ENCODE measurements at regions of chr7 and their contacts with region 1.

Region 1: DNA sequence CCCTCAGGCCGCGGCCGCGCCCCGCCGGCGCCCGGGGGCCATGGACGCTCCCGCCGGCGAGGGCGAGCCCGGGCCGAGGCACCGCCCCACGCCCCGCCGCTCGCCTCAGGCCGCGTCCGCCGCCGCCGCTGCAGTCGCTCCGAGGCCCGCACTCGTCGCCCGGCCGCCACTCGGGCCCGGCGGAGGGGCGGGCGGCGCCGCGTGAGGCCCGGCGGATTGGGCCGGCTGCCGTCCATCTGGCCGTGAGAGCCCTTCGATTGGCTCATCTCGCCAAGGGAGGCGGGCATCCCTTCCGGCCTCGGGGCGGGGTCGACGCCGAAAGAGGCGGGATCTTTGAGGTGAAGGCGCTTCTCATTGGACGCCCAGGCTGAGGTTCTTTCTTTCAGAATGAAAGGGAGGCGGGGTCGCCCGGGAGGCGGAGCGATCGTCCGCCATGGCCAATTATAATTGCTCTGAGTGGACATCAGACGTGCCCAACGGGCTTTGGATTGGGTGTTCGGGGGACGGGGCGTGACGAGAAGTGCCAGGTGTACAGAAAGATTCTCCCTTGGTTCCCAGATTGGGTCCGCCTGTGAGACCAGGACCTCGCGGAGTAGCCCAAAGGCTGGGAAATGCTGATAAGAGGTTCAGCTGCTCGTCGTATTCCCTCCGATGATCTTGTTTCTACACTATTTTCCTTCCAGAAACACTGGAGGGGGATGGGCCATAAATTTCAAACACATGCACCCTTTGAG is at the start of gene GNA12:
- DNase-seq: peak; percentile 97
- ATAC-seq: peak; percentile 93
- H3K4me3 Mint-ChIP-seq: peak within 1 kb of the TSS; percentile 87
- H3K27ac Mint-ChIP-seq: peak within 1 kb of the TSS; percentile 83
- H3K4me1 Mint-ChIP-seq: peaks cover 52% of the 10 kb centered on the region
- H3K27me3 Mint-ChIP-seq: no peaks in the 10 kb centered on the region
- CTCF ChIP-seq: no peak
- total RNA-seq, gene GNA12: 52.3 and 54.6 TPM in 2 replicates

Region 2: GRCh38 chr7:2403014-2403717 is 441.2 kb before region 1 on chr7 and contains the start of gene CHST12:
- CTCF ChIA-PET with region 1: no interaction called
- POLR2A ChIA-PET with region 1: no interaction called
- intact Hi-C with region 1: loop called (anchors 5 kb)
- DNase-seq: peak; percentile 91
- ATAC-seq: peak; percentile 77
- H3K4me3 Mint-ChIP-seq: peak within 1 kb of the TSS; percentile 85
- H3K27ac Mint-ChIP-seq: peak within 1 kb of the TSS; percentile 93
- H3K4me1 Mint-ChIP-seq: peaks cover 47% of the 10 kb centered on the region
- H3K27me3 Mint-ChIP-seq: no peaks in the 10 kb centered on the region
- CTCF ChIP-seq: no peak
- total RNA-seq, gene CHST12: 10.3 and 14.4 TPM in 2 replicates

Region 3: GRCh38 chr7:2555121-2556052 is 288.9 kb before region 1 on chr7 and contains the start of gene BRAT1:
- CTCF ChIA-PET with region 1: no interaction called
- POLR2A ChIA-PET with region 1: interaction called, 9 read pairs
- intact Hi-C with region 1: loop called (anchors 1 kb)
- DNase-seq: peak; percentile 89
- ATAC-seq: peak; percentile 86
- H3K4me3 Mint-ChIP-seq: peak within 1 kb of the TSS; percentile 87
- H3K27ac Mint-ChIP-seq: peak within 1 kb of the TSS; percentile 92
- H3K4me1 Mint-ChIP-seq: peaks cover 45% of the 10 kb centered on the region
- H3K27me3 Mint-ChIP-seq: no peaks in the 10 kb centered on the region
- CTCF ChIP-seq: no peak
- total RNA-seq, gene BRAT1: 29.6 and 31.7 TPM in 2 replicates

Region 4: GRCh38 chr7:2734751-2735571 is 109.4 kb before region 1 on chr7:
- CTCF ChIA-PET with region 1: no interaction called
- POLR2A ChIA-PET with region 1: interaction called, 3 read pairs
- intact Hi-C with region 1: loop called (anchors 5 kb)
- DNase-seq: peak; percentile 28
- ATAC-seq: peak; percentile 54
- H3K4me3 Mint-ChIP-seq: peak overlapping the region; percentile 33
- H3K27ac Mint-ChIP-seq: peak overlapping the region; percentile 54
- H3K4me1 Mint-ChIP-seq: peaks cover 49% of the 10 kb centered on the region
- H3K27me3 Mint-ChIP-seq: no peaks in the 10 kb centered on the region
- CTCF ChIP-seq: no peak

Region 5: DNA sequence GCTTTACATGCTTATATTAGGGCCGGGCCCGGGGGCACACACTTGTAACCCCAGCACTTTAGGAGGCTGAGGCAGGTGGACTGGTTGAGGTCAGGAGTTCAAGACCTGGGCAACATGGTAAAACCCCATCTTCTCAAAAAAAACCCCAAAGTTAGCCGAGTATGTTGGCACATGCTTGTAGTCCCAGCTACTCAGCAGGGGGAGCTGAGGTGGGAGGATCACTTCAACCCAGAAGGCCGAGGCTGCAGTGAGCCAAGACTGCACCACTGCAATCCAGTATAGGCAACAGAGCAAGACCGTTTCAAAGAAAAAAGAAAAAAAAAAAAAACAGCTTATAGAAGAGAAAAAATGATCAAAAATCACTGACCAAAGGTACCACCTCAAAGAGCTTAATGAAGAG is 93.2 kb before region 1 on chr7:
- CTCF ChIA-PET with region 1: no interaction called
- POLR2A ChIA-PET with region 1: no interaction called
- intact Hi-C with region 1: no loop called
- DNase-seq: no peak
- ATAC-seq: no peak
- H3K4me3 Mint-ChIP-seq: no peak overlapping the region
- H3K27ac Mint-ChIP-seq: peak overlapping the region; percentile 13
- H3K4me1 Mint-ChIP-seq: peaks cover 27% of the 10 kb centered on the region
- H3K27me3 Mint-ChIP-seq: no peaks in the 10 kb centered on the region
- CTCF ChIP-seq: no peak

Region 6: DNA sequence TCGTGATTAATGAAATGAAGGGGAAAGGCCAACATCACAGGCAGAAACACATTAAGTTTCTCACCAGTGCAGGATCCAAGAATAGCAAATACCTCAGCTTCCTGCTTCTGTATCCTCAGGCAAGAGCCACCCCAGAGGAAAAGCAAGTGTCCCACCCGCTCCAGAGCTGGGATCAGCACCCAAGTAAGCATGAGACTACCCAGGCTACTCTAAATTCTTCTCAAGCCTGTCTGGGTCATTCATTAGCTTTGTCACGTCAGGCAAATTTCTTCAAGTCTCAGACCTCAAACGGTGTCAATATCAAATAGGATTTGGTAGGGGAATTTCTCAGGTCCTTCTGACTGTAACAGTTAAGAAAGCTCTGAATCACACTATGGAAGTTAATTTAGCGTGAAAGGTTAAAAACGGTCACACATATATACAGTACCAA is 59.2 kb before region 1 on chr7:
- CTCF ChIA-PET with region 1: no interaction called
- POLR2A ChIA-PET with region 1: interaction called, 10 read pairs
- intact Hi-C with region 1: no loop called
- DNase-seq: no peak
- ATAC-seq: peak; percentile 91
- H3K4me3 Mint-ChIP-seq: peak overlapping the region; percentile 56
- H3K27ac Mint-ChIP-seq: peak overlapping the region; percentile 71
- H3K4me1 Mint-ChIP-seq: peaks cover 39% of the 10 kb centered on the region
- H3K27me3 Mint-ChIP-seq: no peaks in the 10 kb centered on the region
- CTCF ChIP-seq: no peak

Region 7: GRCh38 chr7:2821161-2821841 is 23.0 kb before region 1 on chr7:
- CTCF ChIA-PET with region 1: interaction called, 3 read pairs
- POLR2A ChIA-PET with region 1: interaction called, 6 read pairs
- intact Hi-C with region 1: loop called (anchors 1 kb)
- DNase-seq: no peak
- ATAC-seq: peak; percentile 67
- H3K4me3 Mint-ChIP-seq: peak overlapping the region; percentile 74
- H3K27ac Mint-ChIP-seq: peak overlapping the region; percentile 85
- H3K4me1 Mint-ChIP-seq: peaks cover 67% of the 10 kb centered on the region
- H3K27me3 Mint-ChIP-seq: no peaks in the 10 kb centered on the region
- CTCF ChIP-seq: no peak

Region 8: GRCh38 chr7:3218411-3219225 is 374.3 kb after region 1 on chr7:
- CTCF ChIA-PET with region 1: no interaction called
- POLR2A ChIA-PET with region 1: no interaction called
- intact Hi-C with region 1: no loop called
- DNase-seq: no peak
- ATAC-seq: no peak
- H3K4me3 Mint-ChIP-seq: no peak overlapping the region
- H3K27ac Mint-ChIP-seq: no peak overlapping the region
- H3K4me1 Mint-ChIP-seq: no peaks in the 10 kb centered on the region
- H3K27me3 Mint-ChIP-seq: peaks cover 12% of the 10 kb centered on the region
- CTCF ChIP-seq: no peak

Measured in activated B cell treated with CpG ODN at 0.5 μM for 24 hours (primary cell).